Right ventricle myocardium inferior (tissue), 1 donor: ENCODE measurements at regions of chr6 and their contacts with region 1.

Region 1: DNA sequence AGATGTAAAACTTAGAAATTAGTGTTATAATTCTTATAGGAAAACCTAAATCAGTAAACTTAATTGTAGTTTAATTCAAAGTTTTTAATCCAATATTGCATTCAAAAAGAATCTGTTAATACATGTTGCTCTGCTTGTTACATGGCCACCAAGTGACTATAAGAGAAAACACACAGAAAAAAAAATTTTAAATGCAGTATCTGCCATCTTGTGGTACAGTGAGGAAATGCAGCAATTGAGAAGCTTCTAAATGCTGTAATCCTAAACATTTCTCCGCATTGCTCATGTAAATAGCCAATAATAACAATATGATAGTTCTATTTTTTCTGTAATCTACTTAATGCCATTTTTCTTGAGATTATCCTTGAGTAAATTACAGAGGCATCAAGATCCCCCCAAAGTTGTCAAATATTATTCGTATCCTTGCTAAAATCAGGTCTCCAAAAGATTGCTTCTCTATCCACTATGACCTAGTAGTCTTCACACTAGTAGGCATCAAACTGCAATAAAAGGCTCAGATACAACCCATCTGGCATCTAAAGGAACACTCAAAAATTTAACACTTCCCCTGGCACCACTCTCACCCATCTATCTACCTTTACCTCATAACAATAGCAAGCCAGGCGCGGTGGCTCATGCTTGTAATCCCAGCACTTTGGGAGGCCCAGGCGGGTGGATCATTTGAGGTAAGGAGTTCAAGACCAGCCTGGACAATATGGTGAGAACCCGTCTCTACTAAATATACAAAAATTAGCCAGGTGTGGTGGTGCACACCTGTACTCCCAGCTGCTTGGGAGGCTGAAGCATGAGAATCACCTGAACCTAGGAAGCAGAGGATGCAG is 34.6 kb downstream of the HDAC2 start:
- DNase-seq: no peak
- ATAC-seq: no peak

Region 2: DNA sequence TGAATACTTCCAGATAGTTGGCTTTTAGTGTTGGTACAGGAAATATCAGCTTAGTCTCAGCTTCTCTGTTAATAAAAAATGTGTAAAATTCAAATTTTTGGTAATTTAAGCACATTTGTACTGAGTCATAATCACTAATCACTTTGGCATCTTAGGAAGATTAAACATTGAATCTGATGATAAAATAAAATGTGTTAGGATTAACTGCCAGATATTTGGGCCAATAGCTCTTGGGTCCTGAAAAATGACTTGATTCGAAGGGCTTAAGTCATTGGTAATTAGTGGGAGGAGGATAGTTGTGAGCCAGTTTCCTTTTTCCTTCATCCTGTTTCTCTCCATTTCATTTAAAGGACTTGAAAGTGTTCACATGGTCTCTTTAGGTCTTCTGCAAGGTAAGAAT is 1163.1 kb before region 1 on chr6:
- intact Hi-C with region 1: loop called (anchors 10 kb)
- DNase-seq: no peak
- ATAC-seq: no peak

Region 3: DNA sequence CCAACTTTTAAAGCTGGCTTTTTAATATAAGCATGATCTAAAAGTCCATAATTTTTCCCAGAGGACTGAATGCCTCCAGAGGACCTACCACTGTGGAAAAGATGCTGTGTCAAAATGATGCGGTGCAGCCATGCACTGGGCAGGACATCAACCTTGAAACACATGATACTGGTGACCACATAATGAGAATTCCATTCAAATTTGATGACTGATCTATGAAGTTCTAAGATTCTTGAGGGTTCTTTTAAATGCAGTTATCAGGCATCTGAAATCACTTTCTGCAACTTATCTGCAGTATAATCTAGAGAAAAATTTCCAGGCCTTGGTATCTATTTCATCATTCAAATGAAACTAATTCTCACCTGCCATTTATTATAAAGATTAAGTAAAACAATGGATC is 94.2 kb before region 1 on chr6:
- intact Hi-C with region 1: no loop called
- DNase-seq: no peak
- ATAC-seq: no peak